PC-3 (cell line): ENCODE measurements at regions of chr19 and their contacts with region 1.

Region 1: DNA sequence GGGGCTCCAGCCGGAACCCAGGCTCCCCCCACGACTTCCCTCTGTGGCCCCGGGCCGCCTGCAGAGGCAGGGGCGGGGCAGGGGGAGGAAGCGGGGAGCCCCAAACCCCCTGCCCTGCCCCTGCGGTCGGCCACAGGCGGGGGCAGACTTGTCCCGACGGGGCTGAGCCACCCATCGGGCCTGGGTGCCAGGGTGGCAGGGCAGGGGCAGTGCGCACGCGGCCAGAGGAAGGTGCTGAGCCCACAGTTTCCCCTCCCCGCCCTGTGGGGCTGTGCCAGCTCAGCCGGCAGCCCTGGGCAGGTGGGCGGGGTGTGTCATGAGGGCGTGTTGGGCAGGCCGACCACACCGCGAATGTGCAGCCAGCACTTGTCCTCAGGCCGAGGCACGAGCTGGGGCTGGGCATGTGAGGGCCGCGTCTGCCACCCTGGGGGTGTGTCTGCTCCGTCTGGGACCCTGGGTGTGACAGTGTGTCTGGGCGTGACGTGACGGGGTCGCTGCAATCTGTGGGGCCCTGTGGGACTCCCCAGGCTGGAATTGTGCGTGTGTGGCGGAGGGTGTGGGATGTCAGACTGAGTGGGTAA is 17.7 kb downstream of the CCDC97 start:
- DNase-seq: peak; percentile 81
- ATAC-seq: peak; percentile 48
- H3K4me3 ChIP-seq: peak overlapping the region; percentile 16; the same call in 1 of the 2 replicates
- H3K27ac ChIP-seq: peak overlapping the region; percentile 97
- H3K4me1 ChIP-seq: peaks cover 63% of the 10 kb centered on the region
- H3K27me3 ChIP-seq: no peaks in the 10 kb centered on the region
- CTCF ChIP-seq: no peak

Region 2: DNA sequence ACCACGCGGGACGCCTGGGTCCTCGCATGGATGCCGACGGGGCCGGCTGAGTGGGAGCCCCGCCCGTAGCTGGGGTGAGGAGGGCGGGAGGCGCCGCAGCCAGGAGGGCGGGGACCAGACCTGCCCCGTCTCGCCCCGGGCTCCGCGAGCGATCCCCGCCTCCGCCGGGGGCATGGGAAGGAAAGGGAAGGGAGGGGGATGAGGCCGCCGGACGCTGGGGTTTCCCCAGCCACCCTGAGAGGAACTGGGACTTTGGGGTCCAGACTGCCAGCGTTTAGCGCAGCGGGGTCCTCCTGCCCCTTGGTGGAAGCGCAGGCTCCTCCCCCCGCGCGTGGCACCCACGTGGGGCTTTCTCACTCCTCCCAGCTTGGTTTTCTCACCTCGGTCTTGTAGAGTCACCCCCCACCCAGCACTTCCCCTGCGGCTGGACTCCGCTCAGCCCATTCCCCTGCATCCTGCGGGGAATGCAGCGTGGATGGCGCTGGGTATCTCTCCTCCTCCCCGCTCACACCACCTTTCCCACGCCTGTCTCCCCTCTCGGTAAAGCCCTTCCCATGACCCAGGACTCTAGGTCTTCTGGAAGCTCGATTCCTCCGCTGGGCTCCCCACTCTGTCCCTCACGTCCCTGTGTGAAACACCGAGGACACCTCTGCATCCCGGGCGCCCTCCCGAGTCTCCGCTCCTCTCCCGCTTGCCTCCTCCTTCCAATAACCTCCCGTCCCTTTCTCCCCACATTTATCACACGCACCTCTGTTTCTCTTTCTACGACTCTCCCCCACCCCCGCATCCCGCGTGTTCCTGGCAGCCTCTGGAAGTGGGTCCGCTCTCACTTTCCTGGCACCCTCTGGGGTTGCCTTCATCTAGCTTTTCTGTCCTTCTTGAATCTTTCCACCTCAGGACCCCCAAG is 23.9 kb after region 1 on chr19:
- CTCF ChIA-PET with region 1: interaction called, 14 read pairs
- POLR2A ChIA-PET with region 1: no interaction called
- intact Hi-C with region 1: loop called (anchors 2 kb)
- DNase-seq: peak; percentile 35
- ATAC-seq: peak; percentile 43
- H3K4me3 ChIP-seq: peak overlapping the region; percentile 86
- H3K27ac ChIP-seq: no peak overlapping the region
- H3K4me1 ChIP-seq: 0 out of 2 replicates have a peak, but pooled peaks cover 4% of the 10 kb centered on the region
- H3K27me3 ChIP-seq: no peaks in the 10 kb centered on the region
- CTCF ChIP-seq: no peak

Region 3: DNA sequence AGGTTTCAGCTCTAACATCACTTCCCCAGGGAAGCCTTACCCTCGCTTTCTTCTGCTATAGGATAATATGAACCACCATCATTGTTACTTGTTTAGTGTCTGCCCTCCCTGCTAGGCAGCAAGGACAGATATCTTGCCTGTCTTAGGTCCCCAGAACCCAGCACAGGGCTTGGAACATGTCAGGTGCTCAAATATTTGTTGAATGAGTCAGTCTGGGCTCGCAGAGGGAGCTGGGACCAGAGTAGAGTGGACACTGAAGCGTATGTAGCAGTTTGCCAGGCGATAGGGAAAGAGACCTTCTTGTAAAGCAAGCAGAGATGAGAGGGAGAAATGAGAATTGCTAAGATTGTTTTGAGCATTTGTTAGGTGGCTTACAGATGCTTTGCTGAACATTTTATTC is 81.6 kb after region 1 on chr19:
- CTCF ChIA-PET with region 1: no interaction called
- POLR2A ChIA-PET with region 1: no interaction called
- intact Hi-C with region 1: no loop called
- DNase-seq: peak; percentile 83
- ATAC-seq: peak; percentile 100
- H3K4me3 ChIP-seq: no peak overlapping the region
- H3K27ac ChIP-seq: 0 out of 2 replicates have a peak overlapping the region, but pooled peaks have one; percentile 14
- H3K4me1 ChIP-seq: peaks cover 9% of the 10 kb centered on the region
- H3K27me3 ChIP-seq: no peaks in the 10 kb centered on the region
- CTCF ChIP-seq: no peak

Region 4: GRCh38 chr19:41641879-41642485 is 314.3 kb after region 1 on chr19:
- CTCF ChIA-PET with region 1: no interaction called
- POLR2A ChIA-PET with region 1: no interaction called
- intact Hi-C with region 1: no loop called
- DNase-seq: peak; percentile 71
- ATAC-seq: peak; percentile 85
- H3K4me3 ChIP-seq: no peak overlapping the region
- H3K27ac ChIP-seq: no peak overlapping the region
- H3K4me1 ChIP-seq: no peaks in the 10 kb centered on the region
- H3K27me3 ChIP-seq: peaks cover 12% of the 10 kb centered on the region; the same call in 1 of the 2 replicates
- CTCF ChIP-seq: peak; percentile 86

Region 5: GRCh38 chr19:42217520-42218437 is 890.1 kb after region 1 on chr19 and contains the start of gene DEDD2:
- CTCF ChIA-PET with region 1: no interaction called
- POLR2A ChIA-PET with region 1: interaction called, 17 read pairs
- intact Hi-C with region 1: no loop called
- DNase-seq: peak; percentile 96
- ATAC-seq: peak; percentile 72
- H3K4me3 ChIP-seq: peak within 1 kb of the TSS; percentile 97
- H3K27ac ChIP-seq: peak within 1 kb of the TSS; percentile 87
- H3K4me1 ChIP-seq: peaks cover 27% of the 10 kb centered on the region
- H3K27me3 ChIP-seq: no peaks in the 10 kb centered on the region
- CTCF ChIP-seq: no peak
- total RNA-seq, gene DEDD2: 34.4 and 38.2 TPM in 2 replicates